Motor neuron (in vitro differentiated cells): ENCODE measurements at regions of chr2 and their contacts with region 1.

Region 1: DNA sequence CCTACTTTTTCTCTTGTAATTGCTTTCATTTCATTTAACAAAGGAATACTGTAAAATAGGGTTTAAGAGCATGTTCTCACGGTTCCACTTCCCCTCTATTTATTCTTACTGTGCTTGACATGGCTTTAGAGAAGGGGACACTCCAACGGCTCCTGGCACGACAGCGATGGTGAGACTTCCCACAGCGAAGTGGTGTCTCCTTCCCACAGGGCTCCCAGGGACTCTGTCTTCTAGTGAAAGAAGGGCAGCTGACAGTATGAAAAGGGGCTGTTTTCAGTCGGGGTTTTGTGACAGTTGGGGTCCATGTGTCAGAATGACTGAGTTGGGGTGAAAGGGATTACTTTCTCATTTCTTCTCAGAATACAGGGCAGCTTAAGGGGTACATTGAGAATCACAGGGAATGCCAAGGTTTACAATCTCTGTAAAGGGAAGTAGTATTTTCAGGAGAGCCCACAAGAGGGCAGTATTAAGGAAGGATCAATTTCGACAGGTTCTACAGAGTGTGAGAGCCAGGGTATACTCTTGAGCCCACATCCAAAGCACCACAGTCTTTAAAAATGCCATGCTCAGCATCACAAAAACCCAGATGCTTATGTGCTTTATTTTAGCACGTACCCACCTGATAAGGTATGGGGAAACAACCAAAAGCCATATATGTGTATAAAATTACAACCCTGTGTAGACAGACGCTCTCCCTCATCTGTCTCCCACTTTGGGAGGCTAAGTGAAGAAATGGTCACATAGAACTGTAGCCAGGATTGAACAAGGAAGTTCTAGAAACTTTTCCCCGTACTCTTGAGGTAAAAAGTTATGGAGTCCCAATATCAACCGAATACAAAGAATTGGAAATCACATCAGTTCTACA is 31.3 kb upstream of the RAPGEF4 start:
- ATAC-seq: peak in 4 of 8 experiments; percentile 54 to 87 (median 73)
- H3K4me3 ChIP-seq: no peak overlapping the region
- H3K27ac ChIP-seq: no peak overlapping the region
- H3K4me1 ChIP-seq: no peaks in the 10 kb centered on the region

Region 2: GRCh38 chr2:172606285-172606684 is 98.0 kb before region 1 on chr2:
- in situ Hi-C with region 1: loop called in 1 of 9 experiments (anchors 10 kb)
- ATAC-seq: no peak
- H3K4me3 ChIP-seq: no peak overlapping the region
- H3K27ac ChIP-seq: no peak overlapping the region
- H3K4me1 ChIP-seq: no peaks in the 10 kb centered on the region

Region 3: GRCh38 chr2:172772633-172773032 is 68.3 kb after region 1 on chr2:
- in situ Hi-C with region 1: no loop called
- ATAC-seq: peak in 3 of 8 experiments; percentile 36 to 69 (median 59)
- H3K4me3 ChIP-seq: no peak overlapping the region
- H3K27ac ChIP-seq: no peak overlapping the region
- H3K4me1 ChIP-seq: no peaks in the 10 kb centered on the region